Dendritic cell treated with granulocyte-macrophage colony-stimulating factor and Interleukin-4, amounts not matched to agents 40 ng/mL and 50 ng/mL, for 4 days (primary cell): ENCODE measurements at regions of chr7 and their contacts with region 1.

Region 1: GRCh38 chr7:102129636-102130370 is 156.9 kb upstream of the SH2B2 start:
- H3K4me3 Mint-ChIP-seq: no peak overlapping the region
- H3K27ac Mint-ChIP-seq: no peak overlapping the region
- H3K4me1 Mint-ChIP-seq: peaks cover 23% of the 10 kb centered on the region
- H3K27me3 Mint-ChIP-seq: no peaks in the 10 kb centered on the region

Region 2: DNA sequence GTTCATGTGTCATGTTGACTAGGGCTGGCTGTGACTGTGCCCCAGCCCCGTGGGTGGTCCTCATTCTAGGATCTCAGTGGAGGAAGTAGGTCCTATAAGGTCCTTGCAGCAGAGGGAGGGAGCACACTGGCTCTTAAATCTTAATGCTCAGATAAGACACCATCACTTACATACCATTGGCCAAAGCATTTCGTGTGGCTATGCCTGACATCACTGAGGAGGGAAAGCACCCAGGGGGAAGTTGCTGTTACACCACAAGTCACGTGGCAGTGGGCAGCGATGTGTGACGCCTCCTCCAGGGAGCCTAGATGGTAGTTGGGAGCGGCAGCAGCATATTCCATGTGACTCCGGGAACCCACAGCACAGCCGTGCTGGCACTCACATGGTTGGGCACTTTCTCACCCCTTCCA is 67.8 kb before region 1 on chr7:
- intact Hi-C with region 1: loop called (anchors 10 kb)
- H3K4me3 Mint-ChIP-seq: no peak overlapping the region
- H3K27ac Mint-ChIP-seq: peak overlapping the region; percentile 87
- H3K4me1 Mint-ChIP-seq: peaks cover 42% of the 10 kb centered on the region
- H3K27me3 Mint-ChIP-seq: no peaks in the 10 kb centered on the region

Region 3: DNA sequence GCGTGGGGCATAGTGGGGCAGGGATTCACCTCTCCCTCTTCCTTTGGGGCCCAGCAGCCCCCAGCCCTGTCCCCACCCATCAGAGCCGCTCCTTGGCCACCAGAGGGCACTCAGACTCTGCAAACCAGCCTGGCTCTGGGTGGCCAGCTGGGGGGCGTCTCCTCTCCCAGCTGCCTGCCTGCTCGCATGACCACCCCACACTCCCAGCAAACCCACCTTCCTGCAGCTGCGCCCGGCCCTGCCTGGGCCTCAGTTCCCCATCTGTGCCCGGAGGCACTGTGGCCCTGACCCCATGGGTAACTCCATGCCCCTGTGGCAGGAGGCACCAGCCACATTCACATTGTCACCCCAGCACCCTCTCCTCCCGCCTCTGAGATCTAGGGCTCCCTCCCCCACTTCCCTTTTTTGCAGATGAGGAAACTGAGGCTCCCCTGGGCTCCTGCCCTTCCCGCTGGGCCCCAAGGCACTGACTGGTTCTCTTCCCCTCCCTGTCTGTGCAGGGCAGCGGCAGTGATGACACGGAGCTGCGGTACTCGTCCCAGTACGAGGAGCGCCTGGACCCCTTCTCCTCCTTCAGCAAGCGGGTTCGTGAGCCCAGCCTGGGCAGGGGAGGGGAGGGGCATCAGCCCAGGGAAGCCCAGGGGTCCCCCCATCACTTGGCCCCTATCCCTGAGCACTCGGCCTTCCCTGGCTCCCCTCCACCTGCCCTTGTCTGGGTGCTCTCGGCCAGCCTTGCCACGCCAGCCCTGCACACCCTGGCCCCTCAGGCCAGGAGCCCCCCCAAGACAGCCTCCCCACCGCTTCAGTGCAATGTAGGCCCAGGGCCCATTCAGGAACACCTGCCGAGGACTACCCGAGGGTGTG is 150.0 kb after region 1 on chr7:
- intact Hi-C with region 1: no loop called
- H3K4me3 Mint-ChIP-seq: peak overlapping the region; percentile 35
- H3K27ac Mint-ChIP-seq: no peak overlapping the region
- H3K4me1 Mint-ChIP-seq: peaks cover 27% of the 10 kb centered on the region
- H3K27me3 Mint-ChIP-seq: peaks cover 3% of the 10 kb centered on the region